Calu3 (cell line): ENCODE measurements at regions of chr10 and their contacts with region 1.

Region 1: GRCh38 chr10:8365935-8366911 is 311.7 kb downstream of the GATA3 start:
- DNase-seq: peak; percentile 89
- H3K4me3 Mint-ChIP-seq: peak overlapping the region; percentile 71
- H3K27ac Mint-ChIP-seq: peak overlapping the region; percentile 99
- H3K4me1 Mint-ChIP-seq: peaks cover 31% of the 10 kb centered on the region
- H3K27me3 Mint-ChIP-seq: no peaks in the 10 kb centered on the region
- CTCF ChIP-seq: no peak

Region 2: GRCh38 chr10:8053446-8054290 is 312.6 kb before region 1 on chr10:
- CTCF ChIA-PET with region 1: interaction called, 3 read pairs
- intact Hi-C with region 1: loop called (anchors 5 kb)
- DNase-seq: peak; percentile 95
- H3K4me3 Mint-ChIP-seq: peak overlapping the region; percentile 89
- H3K27ac Mint-ChIP-seq: peak overlapping the region; percentile 86
- H3K4me1 Mint-ChIP-seq: peaks cover 9% of the 10 kb centered on the region
- H3K27me3 Mint-ChIP-seq: peaks cover 20% of the 10 kb centered on the region
- CTCF ChIP-seq: peak; percentile 76

Region 3: GRCh38 chr10:8404391-8405120 is 38.3 kb after region 1 on chr10:
- CTCF ChIA-PET with region 1: interaction called, 3 read pairs
- intact Hi-C with region 1: loop called (anchors 1 kb)
- DNase-seq: peak; percentile 26
- H3K4me3 Mint-ChIP-seq: peak overlapping the region; percentile 43
- H3K27ac Mint-ChIP-seq: peak overlapping the region; percentile 80
- H3K4me1 Mint-ChIP-seq: peaks cover 16% of the 10 kb centered on the region
- H3K27me3 Mint-ChIP-seq: no peaks in the 10 kb centered on the region
- CTCF ChIP-seq: no peak

Region 4: GRCh38 chr10:8473205-8473604 is 107.0 kb after region 1 on chr10:
- CTCF ChIA-PET with region 1: no interaction called
- intact Hi-C with region 1: no loop called
- DNase-seq: no peak
- H3K4me3 Mint-ChIP-seq: no peak overlapping the region
- H3K27ac Mint-ChIP-seq: no peak overlapping the region
- H3K4me1 Mint-ChIP-seq: no peaks in the 10 kb centered on the region
- H3K27me3 Mint-ChIP-seq: no peaks in the 10 kb centered on the region
- CTCF ChIP-seq: no peak

Region 5: GRCh38 chr10:8543361-8544069 is 177.3 kb after region 1 on chr10:
- CTCF ChIA-PET with region 1: interaction called, 4 read pairs
- intact Hi-C with region 1: loop called (anchors 1 kb)
- DNase-seq: peak; percentile 88
- H3K4me3 Mint-ChIP-seq: peak overlapping the region; percentile 40
- H3K27ac Mint-ChIP-seq: peak overlapping the region; percentile 99
- H3K4me1 Mint-ChIP-seq: peaks cover 44% of the 10 kb centered on the region
- H3K27me3 Mint-ChIP-seq: no peaks in the 10 kb centered on the region
- CTCF ChIP-seq: no peak

Region 6: DNA sequence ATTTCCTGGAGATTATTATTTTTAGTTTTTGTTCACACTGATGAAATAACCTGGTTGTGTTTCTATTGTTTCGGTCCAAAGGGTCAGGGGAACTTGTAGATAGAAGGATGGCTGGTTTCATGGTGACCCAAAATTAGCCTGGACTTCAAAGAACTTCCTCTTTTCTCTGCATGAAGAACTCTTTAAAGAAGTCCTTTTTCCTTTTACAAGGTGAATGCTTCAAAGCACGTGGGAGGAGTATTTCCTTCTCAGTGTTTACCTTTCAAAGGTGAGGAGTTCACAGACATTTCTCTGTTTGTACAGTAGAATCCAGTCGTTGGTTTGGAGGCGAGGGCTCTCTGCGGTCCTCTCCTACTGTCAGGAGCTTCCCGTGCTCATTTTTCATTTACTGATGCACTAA is 249.9 kb after region 1 on chr10:
- CTCF ChIA-PET with region 1: no interaction called
- intact Hi-C with region 1: loop called (anchors 2 kb)
- DNase-seq: peak; percentile 32
- H3K4me3 Mint-ChIP-seq: no peak overlapping the region
- H3K27ac Mint-ChIP-seq: peak overlapping the region; percentile 82
- H3K4me1 Mint-ChIP-seq: peaks cover 44% of the 10 kb centered on the region
- H3K27me3 Mint-ChIP-seq: no peaks in the 10 kb centered on the region
- CTCF ChIP-seq: no peak

Region 7: GRCh38 chr10:8705415-8705814 is 339.2 kb after region 1 on chr10:
- CTCF ChIA-PET with region 1: no interaction called
- intact Hi-C with region 1: loop called (anchors 10 kb)
- DNase-seq: no peak
- H3K4me3 Mint-ChIP-seq: no peak overlapping the region
- H3K27ac Mint-ChIP-seq: no peak overlapping the region
- H3K4me1 Mint-ChIP-seq: peaks cover 23% of the 10 kb centered on the region
- H3K27me3 Mint-ChIP-seq: no peaks in the 10 kb centered on the region
- CTCF ChIP-seq: no peak

Region 8: DNA sequence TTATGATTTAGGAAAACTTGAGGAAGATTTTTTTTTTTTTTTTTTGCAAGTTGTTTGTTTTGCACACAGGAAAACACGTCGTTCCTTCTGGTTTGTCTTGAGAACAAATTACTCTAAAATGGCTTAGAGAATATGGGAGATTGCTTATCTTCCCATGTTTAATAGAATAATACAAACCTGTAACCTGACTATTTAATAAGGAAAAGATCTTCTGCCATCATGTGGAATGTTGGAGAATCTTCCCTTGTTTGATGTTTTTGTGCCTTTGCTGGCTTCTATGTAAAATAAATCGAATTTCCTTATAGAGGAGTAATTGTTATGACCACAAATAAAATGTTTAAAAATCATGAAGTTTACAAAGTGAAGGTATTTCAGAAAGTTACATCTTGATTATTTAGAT is 507.1 kb after region 1 on chr10:
- CTCF ChIA-PET with region 1: no interaction called
- intact Hi-C with region 1: loop called (anchors 1 kb)
- DNase-seq: no peak
- H3K4me3 Mint-ChIP-seq: no peak overlapping the region
- H3K27ac Mint-ChIP-seq: peak overlapping the region; percentile 21
- H3K4me1 Mint-ChIP-seq: peaks cover 11% of the 10 kb centered on the region
- H3K27me3 Mint-ChIP-seq: no peaks in the 10 kb centered on the region
- CTCF ChIP-seq: no peak